Activated CD4-positive, alpha-beta memory T cell treated with anti-CD3 and anti-CD28 coated beads, Interleukin-2, amount 10 ng/mL, durations not matched to agents 7 days and 5 days (primary cell): ENCODE measurements at regions of chr12 and their contacts with region 1.

Region 1: GRCh38 chr12:14239350-14239934 is 126.0 kb upstream of the ATF7IP start:
- DNase-seq: peak; percentile 51
- H3K4me3 Mint-ChIP-seq: peak overlapping the region; percentile 62
- H3K27ac Mint-ChIP-seq: peak overlapping the region; percentile 75
- H3K4me1 Mint-ChIP-seq: peaks cover 25% of the 10 kb centered on the region
- H3K27me3 Mint-ChIP-seq: no peaks in the 10 kb centered on the region

Region 2: DNA sequence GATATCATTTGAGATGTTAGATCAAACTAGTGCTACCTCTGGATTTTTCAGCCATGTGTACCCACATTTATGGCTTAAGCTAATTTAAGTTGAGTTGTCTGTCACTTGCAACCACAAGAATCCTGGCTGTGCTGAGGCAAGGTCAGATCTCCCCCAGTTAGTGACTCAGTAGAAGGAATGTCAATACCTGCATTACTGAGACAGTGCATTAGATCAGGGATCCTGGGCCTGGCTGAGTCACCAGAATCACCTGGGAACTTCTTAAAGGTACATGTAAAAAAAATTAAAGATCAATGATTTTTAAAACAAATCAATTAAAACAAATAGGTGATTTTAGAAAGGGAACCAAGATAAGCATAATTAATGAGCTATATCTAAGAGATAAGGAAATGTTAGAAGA is 173.4 kb before region 1 on chr12:
- CTCF ChIA-PET with region 1: no interaction called
- POLR2A ChIA-PET with region 1: no interaction called
- DNase-seq: no peak
- H3K4me3 Mint-ChIP-seq: no peak overlapping the region
- H3K27ac Mint-ChIP-seq: no peak overlapping the region
- H3K4me1 Mint-ChIP-seq: no peaks in the 10 kb centered on the region
- H3K27me3 Mint-ChIP-seq: no peaks in the 10 kb centered on the region

Region 3: DNA sequence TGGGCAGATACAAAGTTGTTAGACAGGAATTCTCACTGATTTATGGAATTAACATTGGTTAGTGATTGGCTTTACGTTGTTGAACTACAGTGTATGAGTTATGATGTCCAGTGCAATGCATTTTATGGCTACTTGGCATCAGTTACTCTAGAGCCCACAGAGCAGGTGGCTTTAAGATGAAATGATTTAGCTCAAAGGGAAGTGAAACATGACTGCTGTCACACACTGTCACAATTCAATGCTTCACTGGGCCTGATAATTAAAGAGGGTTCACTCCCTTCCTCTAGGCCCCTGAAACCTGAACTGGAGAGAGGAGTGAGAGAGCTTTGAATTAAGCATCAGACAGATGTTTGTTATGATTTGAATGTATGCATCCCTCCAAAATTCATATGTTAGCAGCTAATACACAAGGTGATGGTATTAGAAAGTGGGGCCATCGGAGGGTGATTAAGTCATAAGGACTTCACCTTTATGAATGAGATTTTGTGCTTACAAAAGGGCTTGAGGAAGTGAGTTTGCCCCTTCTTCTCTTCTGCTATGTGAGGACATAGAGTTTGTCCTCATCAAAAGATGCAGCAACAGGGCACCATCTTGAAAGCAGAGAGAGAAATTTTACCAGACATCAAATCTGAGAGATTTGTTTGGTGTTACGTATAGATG is 82.2 kb before region 1 on chr12:
- CTCF ChIA-PET with region 1: no interaction called
- POLR2A ChIA-PET with region 1: no interaction called
- DNase-seq: no peak
- H3K4me3 Mint-ChIP-seq: no peak overlapping the region
- H3K27ac Mint-ChIP-seq: no peak overlapping the region
- H3K4me1 Mint-ChIP-seq: no peaks in the 10 kb centered on the region
- H3K27me3 Mint-ChIP-seq: peaks cover 2% of the 10 kb centered on the region

Region 4: GRCh38 chr12:14257734-14258574 is 18.5 kb after region 1 on chr12:
- CTCF ChIA-PET with region 1: interaction called, 23 read pairs
- POLR2A ChIA-PET with region 1: interaction called, 20 read pairs
- DNase-seq: peak; percentile 95
- H3K4me3 Mint-ChIP-seq: peak overlapping the region; percentile 55
- H3K27ac Mint-ChIP-seq: peak overlapping the region; percentile 100
- H3K4me1 Mint-ChIP-seq: peaks cover 51% of the 10 kb centered on the region
- H3K27me3 Mint-ChIP-seq: no peaks in the 10 kb centered on the region

Region 5: GRCh38 chr12:14417715-14418114 is 178.3 kb after region 1 on chr12:
- CTCF ChIA-PET with region 1: interaction called, 11 read pairs
- POLR2A ChIA-PET with region 1: interaction called, 5 read pairs
- DNase-seq: peak; percentile 81
- H3K4me3 Mint-ChIP-seq: peak overlapping the region; percentile 73
- H3K27ac Mint-ChIP-seq: peak overlapping the region; percentile 90
- H3K4me1 Mint-ChIP-seq: peaks cover 58% of the 10 kb centered on the region
- H3K27me3 Mint-ChIP-seq: no peaks in the 10 kb centered on the region

Region 6: DNA sequence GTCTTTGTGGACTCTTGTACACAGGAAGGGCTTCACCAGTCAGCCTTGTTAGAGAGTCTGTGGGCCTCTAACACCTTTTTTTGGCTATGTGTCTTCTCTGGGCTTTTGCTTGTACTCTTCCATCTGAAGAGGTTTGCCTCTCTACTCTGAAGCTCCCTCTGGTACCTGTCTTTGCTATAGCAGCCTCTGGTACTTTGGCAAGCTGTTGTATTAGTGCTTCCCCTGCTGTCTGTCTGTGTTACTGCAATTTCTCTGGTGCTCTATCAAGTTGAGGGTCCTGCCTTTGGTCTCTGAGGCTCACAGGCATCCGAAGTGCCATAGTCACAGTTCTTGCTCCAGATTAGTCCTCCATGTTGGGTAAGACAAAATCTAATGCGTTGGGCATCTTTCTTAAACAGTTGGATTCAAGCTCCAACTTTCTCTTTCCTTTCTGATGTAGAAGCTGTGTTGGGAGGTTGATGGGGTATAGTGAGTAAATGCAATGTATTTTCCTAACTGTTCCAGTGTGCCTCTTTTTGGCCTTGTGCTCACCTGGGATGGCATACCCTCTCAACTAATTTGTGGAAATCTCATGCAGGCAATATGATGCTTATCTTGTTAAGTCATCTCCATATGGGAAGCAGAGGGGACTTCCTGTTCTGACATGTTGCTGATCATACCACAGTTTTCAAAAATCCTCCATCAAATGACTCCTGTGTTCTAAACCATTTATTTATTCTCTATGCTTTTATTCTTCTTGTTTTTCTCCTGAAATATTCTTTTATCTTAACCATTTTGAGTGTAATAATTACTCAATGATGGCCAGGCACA is 214.9 kb after region 1 on chr12:
- CTCF ChIA-PET with region 1: interaction called, 47 read pairs
- POLR2A ChIA-PET with region 1: interaction called, 3 read pairs
- DNase-seq: peak; percentile 44
- H3K4me3 Mint-ChIP-seq: peak overlapping the region; percentile 27
- H3K27ac Mint-ChIP-seq: peak overlapping the region; percentile 67
- H3K4me1 Mint-ChIP-seq: peaks cover 41% of the 10 kb centered on the region
- H3K27me3 Mint-ChIP-seq: no peaks in the 10 kb centered on the region

Region 7: DNA sequence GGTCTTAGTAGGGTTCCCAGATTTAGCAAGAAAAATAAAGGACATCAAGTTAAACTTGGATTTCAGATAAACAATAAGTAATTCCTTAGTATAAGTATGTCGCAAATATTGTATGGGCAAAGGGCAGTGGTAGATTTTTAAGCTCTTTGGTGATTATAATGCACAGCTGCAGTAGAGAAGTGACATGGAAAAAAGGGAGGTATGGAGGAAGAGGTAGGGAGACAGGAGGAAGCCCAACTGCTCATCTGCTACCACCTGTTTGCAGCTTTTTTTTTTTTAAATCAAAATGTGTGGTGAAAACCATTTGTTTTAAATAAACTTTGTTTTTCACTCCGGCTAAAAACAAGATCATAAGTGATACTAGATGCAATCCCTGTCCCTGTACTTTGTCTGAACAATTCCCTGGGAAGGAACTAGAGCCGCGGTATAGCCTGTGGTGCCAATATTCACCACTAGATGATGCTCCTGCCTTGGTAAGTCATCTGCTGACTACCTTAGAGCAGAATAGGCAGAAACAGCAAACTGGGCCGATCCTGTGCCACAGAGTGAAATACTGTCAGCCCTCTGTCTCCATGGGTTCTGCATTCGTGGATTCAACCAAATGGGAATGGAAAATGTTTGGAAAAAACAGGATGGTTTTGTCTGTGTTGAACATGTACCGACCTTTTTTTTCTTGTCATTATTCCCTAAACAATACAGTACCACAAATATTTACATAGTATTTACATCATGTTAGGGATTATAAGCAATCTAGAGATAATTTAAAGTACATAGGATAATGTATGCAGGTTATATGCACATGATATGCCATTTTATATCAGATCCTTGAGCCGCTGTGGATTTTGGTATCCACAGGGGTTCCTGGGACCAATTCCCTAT is 390.6 kb after region 1 on chr12:
- CTCF ChIA-PET with region 1: interaction called, 19 read pairs
- POLR2A ChIA-PET with region 1: no interaction called
- DNase-seq: peak; percentile 69
- H3K4me3 Mint-ChIP-seq: no peak overlapping the region
- H3K27ac Mint-ChIP-seq: no peak overlapping the region
- H3K4me1 Mint-ChIP-seq: no peaks in the 10 kb centered on the region
- H3K27me3 Mint-ChIP-seq: peaks cover 10% of the 10 kb centered on the region

Region 8: DNA sequence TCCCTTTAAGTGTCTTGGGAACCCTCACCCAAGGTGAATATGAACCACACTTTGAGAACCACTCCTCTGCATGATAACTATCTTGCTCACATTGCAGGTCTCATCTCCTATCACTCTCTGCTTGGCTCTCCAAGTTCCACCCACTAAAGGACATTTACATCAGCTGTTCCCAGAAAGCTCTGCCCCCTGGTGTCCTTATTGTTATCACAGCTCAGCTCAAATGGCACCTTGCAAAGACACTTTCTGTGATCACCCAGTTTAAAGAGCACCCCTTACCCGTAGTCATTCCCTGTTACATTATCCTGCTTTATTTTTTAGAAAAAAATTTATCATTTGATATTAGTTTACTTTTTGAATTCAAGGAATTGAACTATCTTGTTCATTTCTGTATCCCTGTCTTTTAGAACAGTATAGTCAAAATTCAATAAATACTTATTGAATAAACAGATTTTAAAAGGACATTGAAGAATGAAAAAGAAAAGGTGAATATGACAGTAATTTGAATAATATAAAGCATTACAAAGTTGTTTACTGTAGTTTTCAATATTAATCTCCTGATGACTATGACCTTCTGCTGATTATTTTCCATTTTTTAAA is 477.5 kb after region 1 on chr12:
- CTCF ChIA-PET with region 1: interaction called, 11 read pairs
- POLR2A ChIA-PET with region 1: no interaction called
- DNase-seq: peak; percentile 55
- H3K4me3 Mint-ChIP-seq: no peak overlapping the region
- H3K27ac Mint-ChIP-seq: no peak overlapping the region
- H3K4me1 Mint-ChIP-seq: peaks cover 9% of the 10 kb centered on the region
- H3K27me3 Mint-ChIP-seq: peaks cover 10% of the 10 kb centered on the region